GM12878 (cell line): ENCODE measurements at regions of chr22 and their contacts with region 1.

Region 1: GRCh38 chr22:22357024-22357883 is 112.7 kb downstream of the VPREB1 start:
- DNase-seq: peak; percentile 34
- ATAC-seq: peak; percentile 100
- H3K4me3 ChIP-seq: no peak overlapping the region
- H3K27ac ChIP-seq: no peak overlapping the region
- H3K4me1 ChIP-seq: no peaks in the 10 kb centered on the region
- H3K27me3 ChIP-seq: no peaks in the 10 kb centered on the region
- CTCF ChIP-seq: peak; percentile 59 to 65 (median 62); a peak in 5 of 6 replicates
- EP300 ChIP-seq: no peak
- POLR2A ChIP-seq: no peak
- RAD21 ChIP-seq: peak; percentile 61

Region 2: DNA sequence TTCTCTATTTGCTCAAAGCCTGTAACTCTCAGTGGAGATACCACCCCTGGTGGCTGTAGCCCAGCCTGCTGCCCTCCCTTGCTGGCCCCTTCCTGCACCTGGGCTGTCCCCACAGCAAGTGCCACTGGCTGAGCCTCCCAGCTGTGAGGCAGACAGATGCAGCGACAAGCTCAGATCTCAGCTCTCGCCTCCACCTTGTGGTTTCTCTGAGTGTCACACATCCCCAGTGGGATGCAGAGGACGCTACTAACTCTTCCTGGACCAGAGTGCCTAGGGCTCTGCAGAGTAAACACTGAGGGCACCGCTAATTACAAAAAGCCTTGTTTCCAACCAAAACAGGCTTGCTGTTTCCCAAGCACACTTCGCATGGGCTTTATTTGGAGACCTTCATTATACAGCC is 630.6 kb before region 1 on chr22:
- CTCF ChIA-PET with region 1: no interaction called
- POLR2A ChIA-PET with region 1: no interaction called
- RAD21 ChIA-PET with region 1: no interaction called
- SMC1A ChIA-PET with region 1: no interaction called
- in situ Hi-C with region 1: no loop called
- intact Hi-C with region 1: no loop called
- DNase-seq: no peak
- ATAC-seq: peak; percentile 97
- H3K4me3 ChIP-seq: no peak overlapping the region
- H3K27ac ChIP-seq: no peak overlapping the region
- H3K4me1 ChIP-seq: no peaks in the 10 kb centered on the region; the same call in 1 of the 2 replicates
- H3K27me3 ChIP-seq: no peaks in the 10 kb centered on the region
- CTCF ChIP-seq: peak; percentile 46 to 57 (median 57); a peak in 5 of 6 replicates
- EP300 ChIP-seq: no peak
- POLR2A ChIP-seq: no peak
- RAD21 ChIP-seq: peak; percentile 63

Region 3: DNA sequence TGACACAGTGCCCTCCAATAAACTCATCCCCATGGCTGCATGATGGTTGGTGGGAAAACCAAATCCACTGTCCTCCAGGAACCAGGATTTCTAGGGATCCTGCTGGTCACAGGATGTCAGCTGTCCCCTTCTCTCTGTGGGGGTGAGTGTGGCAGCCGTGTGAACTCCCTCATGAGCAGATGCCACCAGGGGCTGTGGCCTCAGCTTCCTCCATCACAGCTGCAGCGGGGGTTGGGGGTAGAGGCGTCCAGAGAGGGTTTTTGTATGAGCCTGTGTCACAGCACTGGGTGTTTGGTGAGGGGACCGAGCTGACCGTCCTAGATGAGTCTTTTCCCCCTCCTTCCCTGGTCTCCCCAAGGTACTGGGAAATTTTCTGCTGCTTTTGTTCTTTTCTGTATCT is 556.7 kb after region 1 on chr22:
- CTCF ChIA-PET with region 1: no interaction called
- POLR2A ChIA-PET with region 1: no interaction called
- RAD21 ChIA-PET with region 1: no interaction called
- SMC1A ChIA-PET with region 1: no interaction called
- in situ Hi-C with region 1: loop called (anchors 10 kb)
- intact Hi-C with region 1: no loop called
- DNase-seq: no peak
- ATAC-seq: peak; percentile 61
- H3K4me3 ChIP-seq: no peak overlapping the region
- H3K27ac ChIP-seq: no peak overlapping the region
- H3K4me1 ChIP-seq: peaks cover 31% of the 10 kb centered on the region
- H3K27me3 ChIP-seq: no peaks in the 10 kb centered on the region
- CTCF ChIP-seq: no peak
- EP300 ChIP-seq: no peak
- POLR2A ChIP-seq: no peak
- RAD21 ChIP-seq: no peak

Region 4: GRCh38 chr22:23137905-23138561 is 780.8 kb after region 1 on chr22:
- CTCF ChIA-PET with region 1: no interaction called
- POLR2A ChIA-PET with region 1: no interaction called
- RAD21 ChIA-PET with region 1: no interaction called
- SMC1A ChIA-PET with region 1: no interaction called
- in situ Hi-C with region 1: loop called (anchors 10 kb)
- intact Hi-C with region 1: no loop called
- DNase-seq: peak; percentile 86
- ATAC-seq: peak; percentile 72
- H3K4me3 ChIP-seq: 0 out of 2 replicates have a peak overlapping the region, but pooled peaks have one; percentile 7
- H3K27ac ChIP-seq: peak overlapping the region; percentile 86
- H3K4me1 ChIP-seq: peaks cover 60% of the 10 kb centered on the region
- H3K27me3 ChIP-seq: no peaks in the 10 kb centered on the region
- CTCF ChIP-seq: no peak
- EP300 ChIP-seq: peak in 1 of 2 experiments; percentile 65; a peak in 1 of 4 replicates
- POLR2A ChIP-seq: no peak
- RAD21 ChIP-seq: no peak